ENCODE measurements at regions of chr3 and their contacts with region 1.

Region 1: GRCh38 chr3:38136777-38137614 is at the start of gene ACAA1:
- DNase-seq: peak; percentile 96 to 100 (median 100)
- H3K4me3 ChIP-seq: peak within 1 kb of the TSS; percentile 47 to 100 (median 93)
- H3K27ac ChIP-seq: peak within 1 kb of the TSS in 58 of 59 donors; percentile 10 to 96 (median 89)
- H3K27me3 ChIP-seq: no peaks in the 10 kb centered on the region
- CTCF ChIP-seq: peak in 42 of 56 donors; percentile 5 to 64 (median 24)
- total RNA-seq, gene ACAA1: 60.8 to 105 (median 80.7) TPM

Region 2: DNA sequence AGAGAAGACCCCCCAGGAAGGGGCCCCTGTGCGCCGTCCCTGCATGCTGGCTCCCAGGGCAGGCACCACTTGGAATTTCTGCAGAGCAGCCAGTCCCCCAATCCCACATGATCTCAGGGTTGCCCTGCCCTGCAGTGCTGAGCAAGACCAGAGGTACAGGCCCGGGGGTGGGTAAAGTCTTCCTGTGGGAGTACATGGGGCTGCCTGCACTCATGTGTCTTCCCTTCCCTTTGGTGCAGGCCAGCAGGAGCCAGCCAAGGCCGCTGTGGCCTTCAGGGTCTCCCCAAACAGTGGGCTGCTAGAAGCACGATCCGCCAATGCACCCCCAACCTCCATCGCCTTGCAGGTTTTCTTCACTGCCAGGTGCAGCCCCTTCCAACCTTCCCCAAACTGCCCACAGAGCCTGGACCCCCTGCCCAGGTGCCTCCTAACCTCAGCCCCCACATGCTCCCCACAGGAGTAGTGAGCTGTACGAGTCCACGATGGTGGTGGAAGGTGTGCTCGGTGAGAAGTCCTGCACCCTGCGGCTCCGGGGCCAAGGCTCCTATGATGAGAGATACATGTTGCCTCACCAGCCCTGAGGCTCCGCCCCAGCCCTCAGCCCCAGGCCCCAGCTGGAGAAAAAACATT is 15.0 kb before region 1 on chr3:
- intact Hi-C with region 1: no loop called
- DNase-seq: no peak
- H3K4me3 ChIP-seq: no peak overlapping the region
- H3K27ac ChIP-seq: no peak overlapping the region
- H3K27me3 ChIP-seq: no peaks in the 10 kb centered on the region
- CTCF ChIP-seq: no peak

Region 3: GRCh38 chr3:38164966-38165680 is 28.1 kb after region 1 on chr3 and contains the start of gene OXSR1:
- intact Hi-C with region 1: loop called (anchors 1 kb)
- DNase-seq: peak; percentile 95 to 100 (median 99)
- H3K4me3 ChIP-seq: peak within 1 kb of the TSS; percentile 56 to 99 (median 95)
- H3K27ac ChIP-seq: peak within 1 kb of the TSS; percentile 76 to 99 (median 97)
- H3K27me3 ChIP-seq: no peaks in the 10 kb centered on the region
- CTCF ChIP-seq: peak in 9 of 56 donors; percentile 3 to 24 (median 13)
- total RNA-seq, gene OXSR1: 22.6 to 47.5 (median 31.4) TPM

Region 4: GRCh38 chr3:38479431-38480092 is 342.6 kb after region 1 on chr3:
- intact Hi-C with region 1: loop called in 1 of 2 experiments (anchors 10 kb)
- DNase-seq: peak in 8 of 10 donors; percentile 52 to 80 (median 72)
- H3K4me3 ChIP-seq: no peak overlapping the region
- H3K27ac ChIP-seq: no peak overlapping the region
- H3K27me3 ChIP-seq: no peaks in the 10 kb centered on the region
- CTCF ChIP-seq: peak; percentile 42 to 95 (median 84)

Measured in dorsolateral prefrontal cortex (tissue), 120 donors.